Left cardiac atrium (tissue), 4 donors: ENCODE measurements at regions of chr7 and their contacts with region 1.

Region 1: GRCh38 chr7:53050433-53050832 is 15.0 kb downstream of the POM121L12 start:
- DNase-seq: no peak
- ATAC-seq: no peak

Region 2: DNA sequence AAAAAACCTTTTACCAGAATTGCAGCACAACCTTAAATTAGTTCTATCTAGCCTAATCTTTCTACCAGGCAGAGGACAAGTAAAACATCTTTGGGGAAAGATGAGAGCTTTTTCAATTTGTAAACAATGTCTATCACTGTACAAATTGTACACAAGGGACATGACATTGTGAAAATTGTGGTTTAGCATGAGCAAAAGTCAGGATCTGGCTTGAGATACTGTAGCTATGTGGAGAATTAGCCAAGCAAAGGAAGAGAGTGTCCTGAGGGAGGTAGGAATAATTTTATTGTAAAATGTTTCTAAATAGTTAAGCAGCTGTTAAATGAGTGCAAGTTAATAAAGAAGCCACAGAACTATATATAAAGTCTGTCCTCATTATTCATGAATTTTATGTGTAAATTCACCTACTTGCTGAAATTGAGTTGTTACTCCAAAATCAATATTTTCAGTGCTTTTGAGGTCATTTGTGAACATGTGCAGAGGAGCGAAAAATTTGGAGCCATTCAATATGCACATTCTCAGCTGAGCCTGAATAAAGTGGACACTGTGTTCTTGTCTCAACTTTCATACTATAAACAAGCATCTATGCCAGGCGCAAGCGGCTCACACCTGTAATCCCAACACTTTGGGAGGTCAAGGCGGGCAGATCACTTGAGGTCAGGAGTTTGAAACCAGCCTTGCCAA is 57.8 kb before region 1 on chr7:
- intact Hi-C with region 1: loop called in 1 of 2 experiments (anchors 5 kb)
- DNase-seq: no peak
- ATAC-seq: no peak